ENCODE measurements at regions of chr12 and their contacts with region 1.

Region 1: DNA sequence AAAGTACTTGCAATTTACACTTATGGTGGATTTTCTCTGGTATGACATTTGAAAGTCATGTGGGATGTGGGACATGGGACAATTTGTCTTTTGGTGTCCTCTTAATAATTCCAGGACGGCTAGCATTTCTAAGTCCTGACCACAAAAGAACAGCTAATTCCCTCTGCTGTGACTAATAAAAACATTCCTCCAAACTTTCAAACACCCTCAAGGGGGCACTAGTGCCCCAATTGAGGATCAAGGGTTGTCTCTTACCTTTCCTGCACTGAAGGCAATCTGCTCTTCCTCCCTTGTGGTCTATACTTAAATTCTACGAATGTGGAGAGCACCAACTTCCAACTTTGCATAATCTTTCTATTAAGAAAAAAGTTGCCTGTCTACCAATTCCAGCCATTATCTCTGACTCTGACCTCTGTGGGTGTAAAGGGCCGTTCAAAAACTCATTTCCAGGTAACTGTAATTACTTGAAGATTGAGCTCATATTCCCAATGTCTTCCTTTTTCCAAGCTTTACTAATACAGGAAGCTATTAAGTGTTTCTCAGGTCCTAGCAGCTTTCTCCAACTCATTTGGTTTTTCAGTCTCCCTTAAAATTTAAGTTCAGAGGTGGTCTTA is 210.2 kb downstream of the PTPRO start:
- ATAC-seq: peak in 3 of 8 experiments; percentile 80 to 90 (median 84)
- H3K4me3 ChIP-seq: no peak overlapping the region
- H3K27ac ChIP-seq: no peak overlapping the region
- H3K4me1 ChIP-seq: no peaks in the 10 kb centered on the region

Region 2: DNA sequence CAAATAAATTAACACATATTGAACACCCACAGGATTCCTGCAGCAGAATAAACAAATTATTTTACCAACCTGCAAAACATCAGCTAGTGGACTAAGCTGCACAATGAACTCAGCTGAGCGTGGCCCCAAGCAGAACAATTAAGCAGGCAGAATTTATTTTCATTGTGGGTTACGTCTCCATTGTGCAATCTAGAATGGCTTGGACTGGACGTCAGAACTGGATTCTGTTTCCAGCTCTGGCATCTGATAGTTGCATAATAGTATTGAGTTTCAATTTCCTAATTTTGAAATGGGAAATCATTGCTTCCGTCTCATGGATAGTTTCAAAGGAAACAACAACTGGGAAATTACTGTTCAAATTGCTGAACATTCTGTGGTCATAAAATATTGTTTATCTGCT is 275.7 kb before region 1 on chr12:
- in situ Hi-C with region 1: no loop called
- ATAC-seq: peak in 2 of 8 experiments; percentile 35 to 92
- H3K4me3 ChIP-seq: no peak overlapping the region
- H3K27ac ChIP-seq: no peak overlapping the region
- H3K4me1 ChIP-seq: peaks cover 0 to 9% of the 10 kb centered on the region in 2 donors

Region 3: DNA sequence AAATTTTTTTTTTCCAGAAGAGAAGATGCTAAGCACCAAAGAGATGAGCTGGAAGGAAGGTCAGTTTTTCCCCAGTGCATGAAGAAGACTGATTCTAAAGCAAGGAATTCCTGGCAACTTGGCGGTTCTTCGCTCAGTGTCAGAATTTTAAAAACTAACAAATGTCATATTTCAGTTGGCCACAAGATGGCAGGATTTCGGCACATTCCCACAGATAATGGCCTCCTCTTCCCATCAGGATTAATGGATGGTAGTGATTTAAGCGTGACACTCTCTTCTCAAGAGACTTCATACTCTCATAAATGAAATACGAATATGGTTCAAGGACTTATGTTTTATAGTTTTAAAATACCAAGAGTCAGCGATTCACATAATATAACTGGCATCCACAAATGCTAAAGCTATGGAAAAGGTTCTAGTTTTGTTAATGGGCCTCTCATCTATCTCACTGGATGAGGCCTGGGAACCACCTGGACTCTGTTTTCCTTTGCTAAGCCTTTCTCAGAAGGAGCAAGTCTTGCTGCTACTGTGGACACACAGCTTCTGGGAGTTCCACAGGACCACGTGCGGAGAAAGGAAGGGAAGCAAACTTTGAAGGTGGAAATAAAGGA is 256.3 kb before region 1 on chr12:
- in situ Hi-C with region 1: loop called in 5 of 9 experiments (anchors 10 to 25 kb)
- ATAC-seq: peak; percentile 39 to 74 (median 58)
- H3K4me3 ChIP-seq: no peak overlapping the region
- H3K27ac ChIP-seq: no peak overlapping the region
- H3K4me1 ChIP-seq: no peaks in the 10 kb centered on the region

Region 4: GRCh38 chr12:15341371-15341770 is 191.1 kb before region 1 on chr12:
- in situ Hi-C with region 1: no loop called
- ATAC-seq: no peak
- H3K4me3 ChIP-seq: no peak overlapping the region
- H3K27ac ChIP-seq: no peak overlapping the region
- H3K4me1 ChIP-seq: peaks cover 0 to 21% of the 10 kb centered on the region in 2 donors

Region 5: DNA sequence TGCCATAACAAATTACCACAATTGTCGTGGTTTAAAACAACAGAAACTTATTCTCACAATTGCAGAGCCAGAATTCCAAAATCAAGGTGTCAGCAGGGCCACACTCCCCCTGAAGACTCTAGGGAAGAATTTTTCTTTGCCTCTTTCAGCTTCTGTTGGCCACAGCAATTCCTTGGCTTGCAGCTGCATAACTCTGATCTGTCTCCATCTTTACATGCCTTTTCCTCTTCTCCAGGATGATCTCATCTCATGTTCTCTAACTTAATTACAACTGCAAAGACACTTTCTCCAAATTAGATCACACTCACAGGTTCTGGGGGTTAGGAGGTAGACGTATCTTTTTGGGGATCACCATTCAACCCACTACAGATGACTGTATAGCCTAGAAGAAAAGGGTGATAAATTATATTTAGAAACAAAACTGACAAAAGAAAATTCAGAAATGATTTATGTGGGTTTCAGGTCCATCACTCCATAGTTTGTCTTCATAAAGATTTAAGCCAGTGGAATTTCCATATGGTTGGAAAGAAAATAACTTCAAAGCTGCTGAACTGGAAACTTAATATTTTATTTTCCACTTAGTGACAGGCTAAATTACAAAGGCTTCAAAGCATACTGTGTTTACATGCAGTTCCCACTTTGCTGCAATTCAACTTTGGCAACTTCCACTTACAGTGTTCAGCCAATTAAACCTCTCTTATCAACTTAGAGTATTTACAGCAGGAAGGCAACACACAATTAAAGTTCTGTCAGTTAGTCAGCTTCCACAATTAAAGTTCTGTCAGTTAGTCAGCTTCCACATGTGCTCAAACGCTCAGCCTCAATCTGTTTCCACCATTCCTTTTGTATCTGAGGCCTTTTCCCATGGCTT is 43.4 kb after region 1 on chr12:
- in situ Hi-C with region 1: loop called in 1 of 9 experiments (anchors 5 kb)
- ATAC-seq: no peak
- H3K4me3 ChIP-seq: no peak overlapping the region
- H3K27ac ChIP-seq: no peak overlapping the region
- H3K4me1 ChIP-seq: no peaks in the 10 kb centered on the region